ENCODE measurements at regions of chr11 and their contacts with region 1.

Region 1: GRCh38 chr11:10653926-10654810 is 39.4 kb downstream of the IRAG1 start:
- DNase-seq: peak; percentile 53
- ATAC-seq: peak; percentile 80
- H3K4me3 Mint-ChIP-seq: no peak overlapping the region
- H3K27ac Mint-ChIP-seq: no peak overlapping the region
- H3K4me1 Mint-ChIP-seq: peaks cover 20% of the 10 kb centered on the region
- H3K27me3 Mint-ChIP-seq: no peaks in the 10 kb centered on the region

Region 2: DNA sequence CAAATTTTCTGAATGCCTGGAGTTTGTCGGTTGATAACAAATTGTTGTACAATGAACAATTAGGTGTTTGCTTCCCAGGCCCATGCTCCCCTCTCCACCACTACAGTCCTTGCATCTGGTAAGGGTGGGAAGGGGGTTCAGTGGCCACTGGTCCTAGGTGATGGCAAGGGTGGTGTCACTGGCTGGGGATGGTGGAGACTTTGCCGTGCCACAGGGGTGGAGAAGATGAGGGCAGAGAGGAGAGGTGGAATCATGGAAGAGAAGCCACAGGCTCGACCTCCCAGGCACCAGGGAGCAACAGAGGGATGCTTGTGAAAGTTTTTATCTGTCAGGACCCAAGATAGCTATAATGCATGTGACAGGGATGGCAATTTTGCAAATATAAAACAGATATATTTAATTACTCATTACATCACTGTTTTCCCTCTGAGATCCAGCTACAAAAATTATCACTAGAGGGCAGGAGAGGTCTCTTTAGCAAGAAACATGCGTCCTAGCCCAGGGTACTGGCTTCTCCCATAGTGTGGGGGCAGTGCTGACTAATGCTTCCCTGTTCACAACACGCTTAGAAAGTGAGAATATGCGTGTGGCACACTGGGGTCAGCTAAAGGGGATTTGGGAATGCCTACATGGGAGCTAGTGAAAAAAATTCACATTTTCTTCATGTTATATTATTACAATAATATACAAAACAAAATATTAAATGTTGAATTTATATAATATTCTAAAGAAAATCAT is 248.1 kb before region 1 on chr11:
- CTCF ChIA-PET with region 1: interaction called, 21 read pairs
- POLR2A ChIA-PET with region 1: no interaction called
- intact Hi-C with region 1: loop called in 1 of 2 experiments (anchors 1 kb)
- DNase-seq: peak; percentile 70
- ATAC-seq: peak; percentile 87
- H3K4me3 Mint-ChIP-seq: no peak overlapping the region
- H3K27ac Mint-ChIP-seq: no peak overlapping the region
- H3K4me1 Mint-ChIP-seq: peaks cover 13% of the 10 kb centered on the region
- H3K27me3 Mint-ChIP-seq: no peaks in the 10 kb centered on the region

Region 3: GRCh38 chr11:10413268-10413667 is 240.9 kb before region 1 on chr11:
- CTCF ChIA-PET with region 1: interaction called, 16 read pairs
- POLR2A ChIA-PET with region 1: no interaction called
- intact Hi-C with region 1: loop called (anchors 1 kb)
- DNase-seq: peak; percentile 70
- ATAC-seq: peak; percentile 94
- H3K4me3 Mint-ChIP-seq: no peak overlapping the region
- H3K27ac Mint-ChIP-seq: no peak overlapping the region
- H3K4me1 Mint-ChIP-seq: peaks cover 32% of the 10 kb centered on the region
- H3K27me3 Mint-ChIP-seq: no peaks in the 10 kb centered on the region

Region 4: GRCh38 chr11:10666556-10667523 is 12.7 kb after region 1 on chr11:
- CTCF ChIA-PET with region 1: interaction called, 30 read pairs
- POLR2A ChIA-PET with region 1: no interaction called
- intact Hi-C with region 1: no loop called
- DNase-seq: no peak
- ATAC-seq: no peak
- H3K4me3 Mint-ChIP-seq: no peak overlapping the region
- H3K27ac Mint-ChIP-seq: no peak overlapping the region
- H3K4me1 Mint-ChIP-seq: no peaks in the 10 kb centered on the region
- H3K27me3 Mint-ChIP-seq: peaks cover 3% of the 10 kb centered on the region